AG04449 (cell line): ENCODE measurements at regions of chr22 and their contacts with region 1.

Region 1: DNA sequence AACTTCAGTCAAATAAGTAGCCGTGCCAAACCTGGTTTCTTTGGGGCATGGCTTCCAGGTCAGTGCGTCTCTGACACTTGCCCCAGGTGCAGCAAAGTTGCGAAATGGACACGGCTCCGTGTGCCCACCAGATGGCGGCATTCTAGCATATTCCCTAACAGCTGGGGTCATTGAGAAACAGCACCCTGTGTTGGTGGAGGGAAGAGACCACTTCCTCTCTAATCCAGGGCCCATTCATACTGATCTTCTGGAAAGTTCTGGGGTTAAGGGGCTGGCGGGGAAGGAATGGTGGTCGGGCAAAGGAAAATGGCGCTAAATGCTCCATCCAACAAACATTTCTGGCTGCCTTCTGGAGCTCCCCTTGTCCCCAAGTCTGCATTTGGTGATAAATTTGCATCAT is 141.2 kb upstream of the TIMP3 start:
- DNase-seq: no peak
- H3K4me3 ChIP-seq: no peak overlapping the region
- CTCF ChIP-seq: peak; percentile 80

Region 2: DNA sequence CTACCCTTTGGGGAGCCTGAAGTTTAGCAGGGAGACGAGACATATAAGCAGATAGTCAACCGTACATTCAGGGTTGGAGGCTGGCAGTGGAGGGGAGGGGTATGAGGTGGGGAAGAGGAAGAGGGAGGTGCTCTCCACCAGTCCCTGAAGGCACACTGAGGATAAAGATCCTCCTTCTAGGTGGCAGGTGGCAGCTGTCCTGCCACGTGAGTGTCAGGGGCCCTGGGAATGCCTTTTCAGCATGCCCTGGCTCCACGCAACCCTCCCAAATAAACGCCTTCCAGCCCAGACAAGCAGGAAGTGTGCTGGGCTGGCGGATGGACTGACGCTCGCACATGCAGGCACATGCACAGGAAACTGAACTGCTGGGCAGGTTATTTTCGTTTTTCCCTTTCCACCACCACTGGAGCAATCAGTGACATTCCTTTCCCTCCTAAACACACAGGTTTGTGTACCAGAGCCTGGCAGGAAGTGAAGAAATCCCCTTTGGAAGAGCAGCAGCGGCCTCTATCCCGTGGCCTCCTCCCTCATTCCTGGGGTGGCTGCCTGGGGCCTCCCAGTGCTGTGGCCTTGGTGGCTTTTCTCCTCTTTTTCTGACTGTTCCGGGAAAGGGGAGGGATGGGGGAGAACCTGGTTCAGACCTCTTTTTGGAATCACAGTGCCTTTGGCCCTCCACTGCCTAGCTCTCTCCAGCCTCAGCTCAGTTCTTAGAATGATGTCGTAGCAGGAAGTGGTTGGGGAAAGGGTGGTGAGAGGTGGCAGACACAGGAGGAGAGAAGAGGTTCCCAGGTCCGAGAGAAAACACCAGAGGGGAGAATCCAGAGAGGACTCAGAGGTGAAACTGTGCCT is 15.8 kb before region 1 on chr22:
- CTCF ChIA-PET with region 1: interaction called, 59 read pairs
- POLR2A ChIA-PET with region 1: interaction called, 8 read pairs
- DNase-seq: no peak
- H3K4me3 ChIP-seq: no peak overlapping the region
- CTCF ChIP-seq: no peak

Region 3: GRCh38 chr22:32776397-32777186 is 116.3 kb after region 1 on chr22:
- CTCF ChIA-PET with region 1: interaction called, 10 read pairs
- POLR2A ChIA-PET with region 1: no interaction called
- DNase-seq: no peak
- H3K4me3 ChIP-seq: no peak overlapping the region
- CTCF ChIP-seq: no peak

Region 4: DNA sequence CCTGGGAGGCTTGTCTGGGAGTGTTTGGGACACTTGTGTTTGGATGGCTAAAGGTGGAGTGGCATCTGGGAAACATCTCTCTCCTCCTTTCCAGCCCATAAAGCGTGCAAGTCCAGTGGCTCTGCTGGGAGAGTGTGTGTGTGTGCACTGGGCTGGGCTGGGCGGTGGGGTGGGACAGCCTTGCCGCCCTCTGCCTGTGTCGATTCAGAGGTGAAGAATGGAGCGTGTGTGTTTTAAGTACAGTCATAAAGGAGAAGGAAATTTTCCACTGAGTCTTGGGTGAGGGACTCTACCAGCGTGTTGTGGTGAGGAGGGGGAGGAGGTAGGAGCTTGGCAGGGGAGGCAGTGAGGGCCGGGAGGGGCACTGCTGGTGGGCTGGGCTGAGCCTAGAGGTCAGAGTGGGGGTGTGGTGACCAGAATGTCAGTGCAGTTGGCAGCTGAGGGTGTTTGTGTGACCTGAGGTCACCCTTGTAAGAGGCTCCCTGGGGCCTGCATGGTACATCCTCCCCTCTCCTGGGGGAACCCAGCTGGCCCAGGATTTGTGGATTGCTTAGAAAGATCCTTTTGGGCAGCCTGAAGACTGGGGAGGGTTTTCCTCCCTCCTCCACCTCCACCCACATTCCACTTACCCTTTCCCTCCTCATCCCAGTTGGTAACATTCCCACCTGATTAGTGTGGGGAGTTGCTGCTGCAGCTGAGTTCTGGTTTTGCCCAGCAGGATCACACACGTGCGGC is 142.9 kb after region 1 on chr22:
- CTCF ChIA-PET with region 1: interaction called, 578 read pairs
- POLR2A ChIA-PET with region 1: interaction called, 60 read pairs
- DNase-seq: no peak
- H3K4me3 ChIP-seq: peak overlapping the region; percentile 77
- CTCF ChIP-seq: no peak

Region 5: DNA sequence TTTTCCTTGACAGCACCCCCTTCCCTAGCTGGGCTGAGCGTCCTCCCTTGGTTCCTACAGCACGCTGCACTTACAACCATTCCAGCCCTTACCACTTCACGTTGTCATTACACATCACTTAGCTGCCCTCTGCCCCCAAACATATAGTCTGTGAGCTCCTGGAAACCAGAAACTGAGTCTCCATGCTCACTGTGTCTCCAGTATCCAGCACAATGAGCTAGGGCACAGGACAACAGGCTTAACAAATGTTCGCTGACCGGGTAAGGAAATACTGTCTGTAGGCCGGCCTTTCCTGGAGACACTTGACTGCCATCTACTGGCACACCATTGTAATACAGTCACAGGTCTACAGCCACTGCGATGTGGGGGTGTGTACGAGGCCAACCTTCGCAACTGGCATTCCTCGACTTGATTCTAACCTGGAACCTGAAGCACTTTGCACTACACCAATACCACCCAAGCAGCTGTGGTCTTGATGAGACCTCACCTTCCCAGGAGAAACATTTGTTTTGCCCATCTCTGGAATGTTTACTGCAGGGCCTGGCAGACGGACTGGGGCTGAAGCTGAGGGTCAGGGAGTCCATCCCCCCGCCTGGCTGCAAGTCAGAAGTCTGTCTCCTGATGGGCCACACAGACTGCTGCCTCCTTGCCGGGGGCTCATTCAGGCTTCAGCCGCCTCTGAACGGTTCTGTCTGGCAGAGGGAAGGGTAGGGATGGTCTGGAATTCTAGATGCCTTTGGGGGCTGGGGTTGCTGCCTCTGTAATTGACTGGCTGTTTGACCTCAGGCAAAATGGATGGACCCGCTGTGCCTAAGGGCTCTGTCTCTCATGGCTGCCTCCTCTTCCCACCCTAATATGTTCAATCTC is 325.8 kb after region 1 on chr22:
- CTCF ChIA-PET with region 1: interaction called, 28 read pairs
- POLR2A ChIA-PET with region 1: no interaction called
- DNase-seq: peak; percentile 21
- H3K4me3 ChIP-seq: no peak overlapping the region
- CTCF ChIP-seq: peak; percentile 86